ENCODE measurements at regions of chr6 and their contacts with region 1.

Region 1: DNA sequence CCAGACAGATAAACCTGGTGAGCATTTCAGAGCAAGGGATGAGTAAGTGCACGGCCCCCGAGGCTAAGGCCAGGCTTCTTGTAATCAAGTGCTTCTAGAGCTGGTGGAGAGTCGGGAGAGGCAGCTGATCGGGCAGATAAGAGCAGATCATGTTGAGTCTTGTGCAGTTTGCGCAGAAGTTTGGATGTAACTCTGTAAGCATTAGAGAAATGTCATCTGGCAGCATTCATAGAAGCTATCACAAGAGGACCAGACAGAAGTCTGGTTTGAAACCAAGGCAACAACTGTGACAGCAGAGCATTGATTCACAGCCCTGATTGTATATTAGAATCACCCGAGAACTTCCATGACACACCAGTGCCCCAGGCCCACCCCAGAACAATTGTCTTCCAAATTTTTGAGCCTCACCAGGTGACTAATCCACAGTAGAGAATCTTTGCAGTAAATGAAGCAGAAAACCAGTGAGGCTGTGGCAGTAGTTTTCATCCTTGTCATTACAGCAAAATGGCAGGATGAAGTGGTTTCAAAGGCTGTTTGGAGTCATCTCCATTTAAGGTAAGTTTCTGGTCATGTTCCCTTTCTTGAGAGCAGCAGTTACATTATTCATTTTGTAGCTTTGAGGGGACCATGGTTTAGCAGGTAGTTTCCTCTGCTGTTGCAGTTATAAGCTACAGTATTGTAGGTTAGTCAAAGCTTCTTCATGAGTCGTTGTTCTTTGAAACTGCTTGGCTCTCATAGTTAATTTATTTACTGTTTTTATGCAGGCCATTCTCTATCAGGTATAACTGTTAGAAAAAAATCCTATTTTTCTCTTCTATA is 84.1 kb downstream of the RNF217 start:
- DNase-seq: peak; percentile 100
- H3K4me3 ChIP-seq: peak overlapping the region; percentile 26 to 40 (median 29)
- H3K27ac ChIP-seq: peak overlapping the region; percentile 98
- H3K4me1 ChIP-seq: peaks cover 70% of the 10 kb centered on the region
- H3K27me3 ChIP-seq: no peaks in the 10 kb centered on the region
- CTCF ChIP-seq: no peak

Region 2: DNA sequence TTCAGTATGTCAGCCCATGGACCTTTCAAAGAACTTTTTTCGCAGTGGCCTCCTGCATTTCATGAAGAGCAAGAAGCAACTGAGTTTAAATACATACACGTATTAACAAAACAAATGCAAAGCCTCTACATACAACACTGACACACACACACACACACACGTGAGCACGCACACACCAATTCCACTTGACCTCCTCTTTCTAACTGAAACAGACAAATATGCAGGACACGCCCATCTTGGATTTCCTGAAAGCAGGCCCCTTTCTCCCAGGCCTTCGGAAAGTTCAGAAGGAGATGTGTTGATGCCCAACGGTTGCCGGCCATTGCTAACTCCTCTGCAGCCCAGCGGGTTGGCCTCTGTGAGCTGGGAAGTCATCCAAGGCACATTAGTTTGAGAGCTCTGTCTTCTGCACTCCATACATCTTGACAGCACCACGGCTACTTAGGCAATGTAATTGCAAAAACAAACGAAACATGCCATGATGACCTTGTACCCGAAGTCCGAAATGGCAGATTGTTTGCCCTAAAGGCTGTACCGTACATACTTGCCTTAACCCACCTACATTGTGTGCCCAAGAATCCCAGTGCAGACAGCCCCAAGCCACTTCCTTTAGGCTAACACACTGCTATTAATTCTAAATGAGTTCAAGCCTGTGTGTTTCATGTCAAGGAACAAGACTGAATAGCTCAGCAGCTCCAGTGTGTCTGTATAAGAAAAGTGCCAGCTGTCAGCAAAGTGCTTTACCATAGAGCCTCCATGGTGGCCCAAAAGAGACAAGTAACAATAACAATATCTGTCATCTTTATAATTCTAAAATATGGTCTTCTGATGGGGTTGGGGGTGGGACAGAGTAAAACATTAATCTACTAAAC is 222.8 kb before region 1 on chr6:
- CTCF ChIA-PET with region 1: no interaction called
- dilution Hi-C with region 1: no loop called
- in situ Hi-C with region 1: no loop called
- intact Hi-C with region 1: no loop called
- DNase-seq: no peak
- H3K4me3 ChIP-seq: no peak overlapping the region
- H3K27ac ChIP-seq: no peak overlapping the region
- H3K4me1 ChIP-seq: no peaks in the 10 kb centered on the region
- H3K27me3 ChIP-seq: no peaks in the 10 kb centered on the region
- CTCF ChIP-seq: no peak

Region 3: GRCh38 chr6:125013938-125014660 is 32.2 kb before region 1 on chr6:
- CTCF ChIA-PET with region 1: no interaction called
- dilution Hi-C with region 1: no loop called
- in situ Hi-C with region 1: no loop called
- intact Hi-C with region 1: loop called (anchors 1 kb)
- DNase-seq: peak; percentile 46
- H3K4me3 ChIP-seq: no peak overlapping the region
- H3K27ac ChIP-seq: peak overlapping the region; percentile 60
- H3K4me1 ChIP-seq: peaks cover 22% of the 10 kb centered on the region
- H3K27me3 ChIP-seq: no peaks in the 10 kb centered on the region
- CTCF ChIP-seq: no peak

Region 4: DNA sequence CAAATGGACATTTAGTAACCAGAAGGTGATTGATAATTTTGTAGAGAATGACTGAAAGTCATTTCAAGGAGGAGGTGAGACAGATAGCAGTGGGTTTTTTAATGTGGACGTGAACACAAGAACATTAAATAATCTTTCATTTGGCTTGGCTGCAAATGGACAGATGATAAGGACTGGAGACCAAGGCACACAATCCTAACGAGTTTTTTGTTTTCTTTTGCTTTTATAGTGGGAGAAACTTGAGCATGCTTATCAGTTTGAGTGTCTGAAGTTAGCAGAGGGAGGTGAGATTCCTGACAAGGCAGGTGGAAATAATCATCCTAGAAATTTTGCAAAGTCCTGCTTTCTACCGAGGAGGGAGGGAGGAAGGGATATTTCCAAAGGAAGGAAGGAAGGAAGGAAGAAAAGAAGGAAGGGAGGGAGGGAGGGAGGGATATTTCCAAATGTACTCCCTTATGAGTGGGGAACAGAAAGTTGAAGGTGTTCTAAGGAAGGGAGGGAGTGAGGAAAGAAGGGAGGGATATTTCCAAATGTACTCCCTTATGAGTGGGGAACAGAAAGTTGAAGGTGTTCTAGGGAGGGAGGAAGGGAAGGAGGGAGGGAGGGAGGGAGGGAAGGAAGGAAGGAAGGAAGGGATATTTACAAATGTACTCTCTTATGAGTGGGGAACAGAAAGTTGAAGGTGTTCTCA is 21.0 kb before region 1 on chr6:
- CTCF ChIA-PET with region 1: no interaction called
- dilution Hi-C with region 1: no loop called
- in situ Hi-C with region 1: no loop called
- intact Hi-C with region 1: loop called (anchors 2 kb)
- DNase-seq: no peak
- H3K4me3 ChIP-seq: no peak overlapping the region
- H3K27ac ChIP-seq: no peak overlapping the region
- H3K4me1 ChIP-seq: no peaks in the 10 kb centered on the region
- H3K27me3 ChIP-seq: no peaks in the 10 kb centered on the region
- CTCF ChIP-seq: no peak

Region 5: DNA sequence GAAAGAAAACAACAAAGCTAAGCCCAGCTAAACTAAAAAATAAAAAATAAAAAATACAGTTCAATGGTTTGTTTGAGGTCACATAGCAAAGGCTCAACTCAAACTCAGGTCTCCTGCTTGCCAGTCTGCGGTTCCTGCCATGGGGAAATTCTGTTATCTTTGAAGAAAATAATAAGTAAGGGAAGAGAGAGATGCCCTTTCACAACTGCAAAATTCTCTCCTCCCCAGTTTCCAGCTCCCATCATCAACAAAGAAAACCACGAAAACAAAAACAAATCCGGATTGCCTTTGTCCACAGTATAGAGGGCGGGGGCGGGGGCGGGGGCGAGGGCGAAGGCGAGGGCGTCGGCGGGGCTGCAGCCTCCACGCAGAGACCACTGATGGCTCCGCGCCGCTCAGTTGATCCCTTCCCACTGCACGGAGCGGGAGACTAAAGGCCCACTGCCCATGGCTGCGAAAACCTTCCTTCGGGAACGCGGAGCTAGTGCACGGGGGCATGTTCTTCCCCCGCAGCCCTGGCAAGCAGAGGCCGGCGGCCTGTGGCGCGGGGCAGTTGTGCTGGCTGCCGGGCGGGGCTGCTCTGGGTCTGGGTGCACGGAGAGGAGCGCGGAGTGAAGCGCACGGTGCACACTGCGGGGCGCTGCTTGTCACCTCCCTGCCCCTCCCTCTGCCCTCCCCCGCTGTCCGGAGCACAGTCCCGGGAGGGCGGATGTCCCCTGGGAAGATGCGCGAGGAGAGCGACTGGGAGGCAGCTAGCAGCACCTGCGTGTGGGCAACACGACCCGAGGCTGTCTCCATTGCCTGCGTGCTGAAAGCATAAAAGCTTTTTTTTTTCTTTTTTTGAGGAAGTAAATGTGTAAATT is 53.1 kb after region 1 on chr6:
- CTCF ChIA-PET with region 1: no interaction called
- dilution Hi-C with region 1: no loop called
- in situ Hi-C with region 1: no loop called
- intact Hi-C with region 1: loop called (anchors 1 kb)
- DNase-seq: peak; percentile 44
- H3K4me3 ChIP-seq: peak overlapping the region; percentile 28 to 61 (median 50)
- H3K27ac ChIP-seq: no peak overlapping the region
- H3K4me1 ChIP-seq: peaks cover 62% of the 10 kb centered on the region
- H3K27me3 ChIP-seq: no peaks in the 10 kb centered on the region
- CTCF ChIP-seq: no peak